PC-9 (cell line): ENCODE measurements at regions of chr1 and their contacts with region 1.

Region 1: GRCh38 chr1:8097077-8097799 is 71.1 kb upstream of the ERRFI1 start:
- DNase-seq: peak; percentile 50 to 98
- H3K4me3 ChIP-seq: peak overlapping the region; percentile 42; the same call in 1 of the 2 replicates
- H3K27ac ChIP-seq: peak overlapping the region; percentile 100
- H3K4me1 ChIP-seq: peaks cover 55% of the 10 kb centered on the region
- H3K27me3 ChIP-seq: no peaks in the 10 kb centered on the region
- CTCF ChIP-seq: no peak

Region 2: DNA sequence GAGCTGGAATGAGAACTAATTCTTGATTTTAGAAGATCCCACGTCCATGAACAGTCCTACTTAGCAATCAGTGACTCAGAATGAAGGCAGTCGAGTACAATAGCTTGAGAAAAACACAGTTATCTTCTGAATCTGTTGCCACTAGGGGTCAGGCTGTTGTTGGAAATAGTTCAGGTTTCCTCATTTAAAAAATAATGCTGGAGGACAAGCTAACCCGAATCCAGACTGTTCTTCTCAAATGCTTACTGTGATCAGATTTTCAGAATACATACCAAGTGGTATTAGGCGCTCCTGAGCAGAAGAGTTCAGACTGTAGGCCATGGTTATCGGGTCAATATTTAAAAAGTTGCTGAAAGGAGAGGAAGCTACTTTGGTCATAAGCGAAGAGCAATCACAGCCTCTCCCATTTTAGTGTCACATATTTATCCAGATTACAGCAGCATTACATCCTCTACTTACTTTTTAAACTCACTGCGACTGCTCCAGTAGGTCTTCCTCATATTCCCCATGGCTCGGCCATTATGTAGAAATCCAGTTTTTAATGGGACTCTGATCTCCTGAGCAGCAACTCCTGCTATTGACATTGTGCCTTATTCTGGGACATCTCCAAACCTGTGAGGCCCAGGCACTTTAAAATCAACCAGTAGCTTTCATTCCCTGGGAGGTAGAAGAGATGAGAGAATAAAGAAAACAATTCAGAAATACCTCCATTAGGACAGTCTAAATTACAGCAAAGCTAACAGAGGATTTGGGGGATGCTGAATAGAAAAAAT is 82.0 kb before region 1 on chr1:
- CTCF ChIA-PET with region 1: no interaction called
- POLR2A ChIA-PET with region 1: interaction called, 15 read pairs
- intact Hi-C with region 1: loop called (anchors 1 kb)
- DNase-seq: peak; percentile 58 to 72
- H3K4me3 ChIP-seq: peak overlapping the region; percentile 91; the same call in 1 of the 2 replicates
- H3K27ac ChIP-seq: peak overlapping the region; percentile 90
- H3K4me1 ChIP-seq: peaks cover 75% of the 10 kb centered on the region
- H3K27me3 ChIP-seq: no peaks in the 10 kb centered on the region
- CTCF ChIP-seq: peak; percentile 70

Region 3: DNA sequence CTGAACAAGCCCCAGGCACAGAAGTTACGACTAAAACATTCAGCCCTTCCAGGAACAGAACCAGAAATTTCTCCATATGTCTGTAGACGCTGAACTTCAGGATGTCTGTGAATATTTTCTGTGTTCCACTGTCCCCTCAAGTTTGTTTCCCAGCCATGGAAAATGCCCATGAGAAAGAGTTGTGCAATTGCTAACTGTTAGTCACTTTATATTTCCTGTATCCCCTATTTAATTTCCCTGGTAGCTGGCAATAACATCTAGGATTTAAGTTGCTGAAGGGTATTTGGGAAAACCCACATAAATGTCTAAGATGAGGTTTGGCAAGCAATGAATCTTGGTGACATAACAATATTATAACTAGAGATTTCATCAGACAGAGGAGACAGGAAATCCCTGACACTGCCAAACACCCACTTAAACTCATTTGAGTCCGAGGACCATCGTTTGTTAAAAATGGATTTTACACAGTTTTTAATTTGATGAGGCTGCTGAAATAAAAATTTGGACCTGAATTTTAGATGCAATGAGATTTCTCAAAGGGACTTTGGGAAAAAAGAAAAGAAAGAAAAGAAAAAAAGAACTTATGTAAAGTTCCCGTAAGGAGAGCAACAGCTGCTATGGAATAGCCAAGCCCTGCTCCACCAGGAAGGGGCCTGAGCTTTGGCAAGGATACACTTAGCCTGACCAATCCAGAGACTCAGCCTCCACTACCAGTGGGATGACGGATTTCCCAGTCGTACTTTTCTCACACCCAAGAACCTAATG is 49.4 kb before region 1 on chr1:
- CTCF ChIA-PET with region 1: no interaction called
- POLR2A ChIA-PET with region 1: no interaction called
- intact Hi-C with region 1: loop called (anchors 2 kb)
- DNase-seq: peak in 1 of 2 experiments; percentile 90
- H3K4me3 ChIP-seq: no peak overlapping the region; the same call in 1 of the 2 replicates
- H3K27ac ChIP-seq: peak overlapping the region; percentile 97
- H3K4me1 ChIP-seq: peaks cover 47% of the 10 kb centered on the region
- H3K27me3 ChIP-seq: no peaks in the 10 kb centered on the region
- CTCF ChIP-seq: no peak

Region 4: GRCh38 chr1:8077120-8077573 is 20.1 kb before region 1 on chr1:
- CTCF ChIA-PET with region 1: interaction called, 3 read pairs
- POLR2A ChIA-PET with region 1: interaction called, 10 read pairs
- intact Hi-C with region 1: loop called (anchors 1 kb)
- DNase-seq: peak; percentile 67 to 92
- H3K4me3 ChIP-seq: no peak overlapping the region
- H3K27ac ChIP-seq: peak overlapping the region; percentile 98
- H3K4me1 ChIP-seq: peaks cover 69% of the 10 kb centered on the region
- H3K27me3 ChIP-seq: no peaks in the 10 kb centered on the region
- CTCF ChIP-seq: no peak

Region 5: DNA sequence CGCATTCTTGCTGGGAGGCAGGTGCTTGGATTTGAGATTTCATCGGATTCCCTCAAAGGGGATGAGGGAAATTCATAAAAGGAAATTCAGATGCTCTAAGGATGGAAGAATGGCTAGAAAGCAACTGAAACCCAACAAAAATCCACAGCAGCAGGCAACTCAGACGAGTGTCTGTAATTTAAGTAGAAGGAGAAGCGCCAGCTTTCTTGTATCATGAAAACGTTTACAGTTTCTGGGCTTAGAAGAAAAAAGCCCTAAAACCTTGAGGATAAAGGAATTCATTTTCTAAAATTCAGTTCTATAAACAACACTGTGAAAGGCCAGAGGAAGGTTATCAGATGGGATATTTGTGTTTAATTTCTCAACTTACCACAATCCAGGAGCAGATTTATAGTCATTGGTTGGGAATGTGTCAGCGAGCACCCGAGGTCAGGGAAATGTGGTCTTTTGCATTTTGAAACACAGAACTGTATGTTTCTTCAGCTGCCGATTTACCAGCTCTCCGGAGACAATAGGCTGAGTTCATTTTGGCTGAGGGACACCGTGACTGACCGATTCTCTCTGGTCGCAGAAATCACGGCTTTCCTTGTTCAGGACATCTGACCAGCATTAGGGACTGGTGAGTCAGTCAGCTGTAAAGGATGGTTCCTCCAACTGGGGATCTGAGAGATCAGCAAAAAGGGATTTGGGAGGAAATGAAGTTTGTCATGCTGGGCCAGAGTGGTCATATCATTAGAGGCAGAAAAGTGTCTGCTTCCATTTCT is 40.4 kb after region 1 on chr1:
- CTCF ChIA-PET with region 1: no interaction called
- POLR2A ChIA-PET with region 1: interaction called, 8 read pairs
- intact Hi-C with region 1: loop called (anchors 5 kb)
- DNase-seq: peak; percentile 55 to 94
- H3K4me3 ChIP-seq: peak overlapping the region; percentile 54; the same call in 1 of the 2 replicates
- H3K27ac ChIP-seq: peak overlapping the region; percentile 100
- H3K4me1 ChIP-seq: peaks cover 85% of the 10 kb centered on the region
- H3K27me3 ChIP-seq: no peaks in the 10 kb centered on the region
- CTCF ChIP-seq: no peak

Region 6: DNA sequence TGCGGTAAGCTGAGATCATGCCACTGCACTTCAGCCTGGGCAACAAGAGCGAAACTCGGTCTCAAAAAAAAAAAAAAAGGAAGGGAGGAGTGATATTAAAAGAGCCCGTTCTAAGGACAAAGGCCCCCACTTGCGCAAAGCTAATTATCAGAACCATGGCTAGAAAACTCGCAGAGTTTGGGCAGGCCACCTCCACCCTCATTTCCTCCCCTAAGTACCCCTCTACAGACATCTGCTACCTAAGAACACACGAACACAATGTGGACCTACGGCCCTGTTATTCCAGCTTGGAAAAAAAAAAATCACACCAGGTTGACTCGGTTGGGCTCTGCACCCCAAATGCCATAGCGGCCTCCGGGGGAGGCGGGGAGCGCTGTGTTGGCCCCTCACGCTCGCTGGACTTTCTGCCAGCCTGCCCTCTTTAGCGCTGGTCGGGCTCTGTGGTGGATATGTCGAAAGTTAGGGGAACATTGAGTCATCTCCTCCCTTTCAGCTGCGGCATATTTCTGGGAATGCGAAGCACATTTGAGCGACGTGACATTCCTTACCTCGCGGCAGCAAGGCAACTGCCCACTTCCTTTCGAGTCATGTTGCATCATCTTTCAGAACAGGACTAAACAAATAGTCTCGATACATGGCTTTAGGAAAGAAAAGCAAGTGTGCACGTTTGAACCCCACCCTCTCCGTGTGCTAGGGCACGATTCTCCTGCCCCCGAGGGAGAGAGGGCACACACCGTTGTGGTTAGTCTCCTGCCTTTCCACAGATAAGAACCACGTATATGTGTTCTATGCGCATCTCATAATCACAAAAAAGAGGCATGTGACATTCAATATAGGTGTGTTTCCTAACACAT is 114.6 kb after region 1 on chr1:
- CTCF ChIA-PET with region 1: no interaction called
- POLR2A ChIA-PET with region 1: interaction called, 44 read pairs
- intact Hi-C with region 1: no loop called
- DNase-seq: peak; percentile 84 to 95
- H3K4me3 ChIP-seq: peak overlapping the region; percentile 38; the same call in 1 of the 2 replicates
- H3K27ac ChIP-seq: peak overlapping the region; percentile 99
- H3K4me1 ChIP-seq: peaks cover 51% of the 10 kb centered on the region
- H3K27me3 ChIP-seq: no peaks in the 10 kb centered on the region
- CTCF ChIP-seq: no peak